Right cardiac atrium (tissue), 5 donors: ENCODE measurements at regions of chr15 and their contacts with region 1.

Region 1: GRCh38 chr15:65638681-65639089 is 16.9 kb downstream of the SLC24A1 start:
- DNase-seq: no peak
- ATAC-seq: peak; percentile 75 to 76
- H3K4me3 ChIP-seq: no peak overlapping the region
- H3K27ac ChIP-seq: no peak overlapping the region
- H3K4me1 ChIP-seq: peaks cover 2% of the 10 kb centered on the region
- H3K27me3 ChIP-seq: no peaks in the 10 kb centered on the region

Region 2: GRCh38 chr15:65414841-65415621 is 223.7 kb before region 1 on chr15:
- intact Hi-C with region 1: no loop called
- DNase-seq: peak; percentile 27 to 79 (median 69)
- ATAC-seq: peak; percentile 61 to 69
- H3K4me3 ChIP-seq: no peak overlapping the region
- H3K27ac ChIP-seq: peak overlapping the region; percentile 32
- H3K4me1 ChIP-seq: peaks cover 6% of the 10 kb centered on the region
- H3K27me3 ChIP-seq: no peaks in the 10 kb centered on the region

Region 3: GRCh38 chr15:65856821-65857455 is 218.3 kb after region 1 on chr15:
- intact Hi-C with region 1: loop called in 1 of 4 experiments (anchors 10 kb)
- DNase-seq: peak; percentile 58 to 84 (median 79)
- ATAC-seq: peak; percentile 48 to 61
- H3K4me3 ChIP-seq: no peak overlapping the region
- H3K27ac ChIP-seq: no peak overlapping the region
- H3K4me1 ChIP-seq: no peaks in the 10 kb centered on the region
- H3K27me3 ChIP-seq: no peaks in the 10 kb centered on the region